HCT116 (cell line): ENCODE measurements at regions of chr10 and their contacts with region 1.

Region 1: GRCh38 chr10:100346765-100347567 is at the start of gene SCD:
- DNase-seq: peak; percentile 89
- ATAC-seq: peak; percentile 88
- H3K4me3 ChIP-seq: peak within 1 kb of the TSS; percentile 92
- H3K27ac ChIP-seq: peak within 1 kb of the TSS; percentile 96
- H3K4me1 ChIP-seq: peaks cover 44 to 54% of the 10 kb centered on the region in 2 experiments
- H3K27me3 ChIP-seq: no peaks in the 10 kb centered on the region
- CTCF ChIP-seq: no peak
- POLR2A ChIP-seq: peak; percentile 74
- RAD21 ChIP-seq: no peak
- total RNA-seq, gene SCD: 652 TPM

Region 2: DNA sequence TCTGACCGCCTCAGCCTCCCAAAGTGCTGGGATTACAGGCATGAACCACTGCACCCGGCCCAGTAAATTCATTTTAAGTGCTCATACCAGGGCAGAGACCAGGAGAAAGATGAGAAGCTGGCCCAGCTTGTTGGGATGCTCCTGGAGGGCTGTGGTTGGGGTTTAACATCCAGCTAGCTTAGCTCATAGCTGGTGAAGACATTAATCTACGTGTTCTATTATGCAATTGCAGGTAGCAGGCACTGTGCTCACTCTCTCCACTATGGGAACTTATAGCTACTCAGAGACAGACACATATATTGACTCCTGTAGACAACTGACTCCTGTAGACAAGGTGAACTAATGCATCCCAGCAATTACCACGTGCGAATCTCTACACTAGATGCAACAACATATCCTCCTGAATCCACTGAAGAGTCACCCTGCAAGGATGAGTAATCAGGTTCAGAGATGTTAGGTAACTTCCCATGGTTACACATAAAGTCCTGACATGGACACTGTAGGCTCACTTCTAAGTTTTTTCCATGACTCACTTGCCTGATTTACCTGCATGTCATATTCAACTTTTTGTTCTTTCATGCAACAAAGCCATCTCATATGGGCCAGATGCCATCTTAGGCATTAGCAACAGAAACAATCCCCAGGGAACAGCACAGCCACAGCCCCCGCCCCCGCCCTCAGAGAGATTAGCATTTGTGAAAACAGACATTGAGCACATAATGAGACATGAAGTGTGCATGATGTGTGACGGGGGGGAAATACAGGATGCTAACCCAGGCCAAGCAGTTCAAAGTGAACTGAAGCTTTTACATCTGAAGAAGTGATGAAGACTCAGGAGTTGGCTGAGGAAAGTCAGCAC is 198.4 kb before region 1 on chr10:
- CTCF ChIA-PET with region 1: no interaction called
- POLR2A ChIA-PET with region 1: no interaction called
- RAD21 ChIA-PET with region 1: no interaction called
- intact Hi-C with region 1: no loop called
- DNase-seq: peak; percentile 60
- ATAC-seq: peak; percentile 44
- H3K4me3 ChIP-seq: no peak overlapping the region
- H3K27ac ChIP-seq: no peak overlapping the region
- H3K4me1 ChIP-seq: peaks cover 0 to 28% of the 10 kb centered on the region in 2 experiments; a peak in 2 of 4 replicates
- H3K27me3 ChIP-seq: no peaks in the 10 kb centered on the region
- CTCF ChIP-seq: no peak
- POLR2A ChIP-seq: no peak
- RAD21 ChIP-seq: no peak

Region 3: GRCh38 chr10:100286051-100287033 is 60.6 kb before region 1 on chr10 and contains the start of gene BLOC1S2:
- CTCF ChIA-PET with region 1: no interaction called
- POLR2A ChIA-PET with region 1: no interaction called
- RAD21 ChIA-PET with region 1: no interaction called
- intact Hi-C with region 1: no loop called
- DNase-seq: peak; percentile 75
- ATAC-seq: peak; percentile 94
- H3K4me3 ChIP-seq: peak within 1 kb of the TSS; percentile 76 to 94
- H3K27ac ChIP-seq: peak within 1 kb of the TSS; percentile 74
- H3K4me1 ChIP-seq: peaks cover 13 to 18% of the 10 kb centered on the region in 2 experiments; a peak in 3 of 4 replicates
- H3K27me3 ChIP-seq: no peaks in the 10 kb centered on the region
- CTCF ChIP-seq: no peak
- POLR2A ChIP-seq: peak; percentile 88
- RAD21 ChIP-seq: no peak
- total RNA-seq, gene BLOC1S2: 54.6 TPM

Region 4: GRCh38 chr10:100373298-100374136 is 26.6 kb after region 1 on chr10:
- CTCF ChIA-PET with region 1: interaction called, 14 read pairs
- POLR2A ChIA-PET with region 1: interaction called, 52 read pairs
- RAD21 ChIA-PET with region 1: interaction called, 14 to 16 read pairs
- intact Hi-C with region 1: loop called (anchors 1 kb)
- DNase-seq: peak; percentile 100
- ATAC-seq: peak; percentile 81
- H3K4me3 ChIP-seq: peak overlapping the region; percentile 60 to 70
- H3K27ac ChIP-seq: peak overlapping the region; percentile 99
- H3K4me1 ChIP-seq: peaks cover 74 to 84% of the 10 kb centered on the region in 2 experiments
- H3K27me3 ChIP-seq: no peaks in the 10 kb centered on the region
- CTCF ChIP-seq: no peak
- POLR2A ChIP-seq: peak; percentile 87
- RAD21 ChIP-seq: no peak

Region 5: GRCh38 chr10:100433253-100434240 is 86.6 kb after region 1 on chr10:
- CTCF ChIA-PET with region 1: interaction called, 22 read pairs
- POLR2A ChIA-PET with region 1: interaction called, 3 read pairs
- RAD21 ChIA-PET with region 1: interaction called, 5 to 8 read pairs
- intact Hi-C with region 1: loop called (anchors 1 kb)
- DNase-seq: peak; percentile 97
- ATAC-seq: peak; percentile 96
- H3K4me3 ChIP-seq: no peak overlapping the region
- H3K27ac ChIP-seq: no peak overlapping the region
- H3K4me1 ChIP-seq: peaks cover 0 to 9% of the 10 kb centered on the region in 2 experiments; a peak in 2 of 4 replicates
- H3K27me3 ChIP-seq: no peaks in the 10 kb centered on the region
- CTCF ChIP-seq: peak; percentile 100
- POLR2A ChIP-seq: no peak
- RAD21 ChIP-seq: peak; percentile 100

Region 6: DNA sequence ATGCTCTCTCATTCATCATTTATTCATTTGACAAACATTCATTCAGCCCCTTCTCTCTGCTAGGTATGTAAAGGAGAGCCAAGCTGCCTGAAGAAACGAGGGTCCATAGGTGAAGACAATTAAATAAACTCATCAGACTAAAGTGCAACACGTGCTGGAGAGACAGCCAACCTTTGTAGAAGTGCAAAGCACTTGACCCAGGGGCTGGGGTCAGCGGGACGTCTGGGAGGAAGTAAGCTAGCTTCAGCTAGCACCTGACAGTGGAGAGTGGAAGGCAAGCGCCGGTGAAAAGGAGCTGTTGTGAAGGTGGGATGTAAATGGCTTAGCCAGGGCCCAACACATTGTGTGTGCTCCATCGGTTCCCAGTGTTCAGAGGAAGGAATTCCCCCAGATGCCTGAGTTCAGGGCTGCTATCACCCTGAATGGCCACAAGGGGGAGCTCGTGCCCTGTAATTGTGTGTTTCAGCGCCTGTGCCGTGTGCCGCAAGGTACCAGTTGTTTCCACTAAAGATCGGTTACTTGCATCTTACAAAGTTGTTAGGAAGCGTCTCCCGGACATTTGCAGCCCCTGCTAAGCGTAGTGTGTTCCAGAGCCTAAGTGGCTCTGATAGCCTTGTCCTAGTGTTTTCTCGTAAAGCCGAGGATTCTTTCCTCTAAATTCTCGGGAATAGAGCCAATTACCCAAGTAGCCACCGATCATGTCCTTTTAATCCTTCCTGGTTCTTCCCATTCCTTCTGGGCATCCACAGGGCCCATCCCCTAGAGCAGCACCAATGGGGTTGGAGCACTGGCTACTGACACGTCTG is 814.7 kb after region 1 on chr10:
- CTCF ChIA-PET with region 1: no interaction called
- POLR2A ChIA-PET with region 1: no interaction called
- RAD21 ChIA-PET with region 1: no interaction called
- intact Hi-C with region 1: no loop called
- DNase-seq: peak; percentile 72
- ATAC-seq: peak; percentile 95
- H3K4me3 ChIP-seq: peak overlapping the region; percentile 38 to 47
- H3K27ac ChIP-seq: no peak overlapping the region
- H3K4me1 ChIP-seq: peaks cover 4 to 15% of the 10 kb centered on the region in 2 experiments; a peak in 3 of 4 replicates
- H3K27me3 ChIP-seq: no peaks in the 10 kb centered on the region
- CTCF ChIP-seq: peak; percentile 95 to 100 (median 99)
- POLR2A ChIP-seq: no peak
- RAD21 ChIP-seq: peak; percentile 99